ENCODE measurements at regions of chr1 and their contacts with region 1.

Region 1: DNA sequence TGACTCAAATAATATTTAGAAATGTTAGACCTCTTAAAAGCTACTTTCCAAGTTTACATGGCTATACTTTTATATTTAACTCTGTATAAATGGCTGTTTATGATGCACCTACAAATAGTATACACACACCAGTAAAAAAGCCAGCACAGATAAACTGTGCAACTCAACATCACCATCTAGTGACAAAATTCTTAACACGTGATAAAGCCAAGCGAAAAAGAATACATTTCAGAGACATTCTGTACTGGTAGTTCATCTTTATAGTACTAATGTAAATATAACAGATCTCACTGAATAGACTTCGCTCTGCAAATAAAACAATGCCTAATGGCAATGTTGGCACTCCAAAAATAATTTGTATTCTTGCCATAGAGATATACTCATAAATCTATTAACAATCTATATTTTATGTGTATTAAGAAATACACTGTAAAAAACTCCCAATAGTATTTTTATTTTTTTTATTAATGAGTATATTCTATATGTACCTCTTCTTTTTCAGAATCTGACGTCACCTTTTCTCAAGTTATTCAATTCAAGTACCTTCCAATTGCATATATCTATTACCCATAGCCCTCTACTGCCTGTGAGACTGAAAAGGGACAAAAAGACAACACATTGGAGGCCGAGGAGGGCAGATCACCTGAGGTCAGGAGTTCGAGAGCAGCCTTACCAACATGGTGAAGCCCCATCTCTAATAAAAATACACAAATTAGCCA is 100.2 kb downstream of the DPYD start:
- DNase-seq: peak in 1 of 35 experiments; percentile 29
- ATAC-seq: no peak
- H3K4me3 ChIP-seq: no peak overlapping the region
- H3K4me3 Mint-ChIP-seq: no peak overlapping the region
- H3K27ac ChIP-seq: no peak overlapping the region
- H3K27ac Mint-ChIP-seq: no peak overlapping the region
- H3K4me1 ChIP-seq: no peaks in the 10 kb centered on the region
- H3K4me1 Mint-ChIP-seq: peaks cover 2 to 8% (median 2%) of the 10 kb centered on the region in 3 donors
- H3K27me3 ChIP-seq: no peaks in the 10 kb centered on the region
- H3K27me3 Mint-ChIP-seq: no peaks in the 10 kb centered on the region

Region 2: GRCh38 chr1:97212671-97213070 is 608.0 kb before region 1 on chr1:
- CTCF ChIA-PET with region 1: interaction called in 1 of 2 experiments, 12 read pairs
- POLR2A ChIA-PET with region 1: no interaction called
- DNase-seq: no peak
- ATAC-seq: no peak
- H3K4me3 ChIP-seq: no peak overlapping the region
- H3K4me3 Mint-ChIP-seq: no peak overlapping the region
- H3K27ac ChIP-seq: no peak overlapping the region
- H3K27ac Mint-ChIP-seq: no peak overlapping the region
- H3K4me1 ChIP-seq: no peaks in the 10 kb centered on the region
- H3K4me1 Mint-ChIP-seq: no peaks in the 10 kb centered on the region
- H3K27me3 ChIP-seq: no peaks in the 10 kb centered on the region
- H3K27me3 Mint-ChIP-seq: no peaks in the 10 kb centered on the region